Posterior cingulate gyrus (tissue), 11 donors: ENCODE measurements at regions of chr2 and their contacts with region 1.

Region 1: DNA sequence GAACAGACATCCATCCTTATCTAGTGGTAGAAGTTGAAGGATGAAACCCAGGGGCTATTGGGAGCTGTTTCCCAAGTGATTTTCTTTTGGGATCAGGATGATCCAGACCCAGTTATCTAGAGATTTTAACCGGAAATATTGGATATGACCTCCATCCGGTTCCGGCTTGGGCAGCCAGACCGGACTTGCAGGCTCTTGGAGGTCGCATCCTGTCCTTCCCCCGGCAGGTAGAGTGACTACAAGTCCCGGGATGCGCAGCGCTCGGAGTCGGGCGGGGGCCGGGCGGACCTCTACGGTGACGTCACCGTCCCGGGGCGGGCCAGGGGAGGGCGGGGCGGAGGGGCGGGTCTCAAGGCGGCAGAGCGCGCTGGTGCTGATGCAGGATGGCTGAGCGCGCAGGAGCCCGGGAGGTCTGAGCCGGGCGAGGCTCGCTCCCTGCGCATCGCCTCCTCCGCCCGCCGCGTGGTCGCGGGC is at the start of gene KIF5C:
- DNase-seq: peak; percentile 80 to 99 (median 95)

Region 2: DNA sequence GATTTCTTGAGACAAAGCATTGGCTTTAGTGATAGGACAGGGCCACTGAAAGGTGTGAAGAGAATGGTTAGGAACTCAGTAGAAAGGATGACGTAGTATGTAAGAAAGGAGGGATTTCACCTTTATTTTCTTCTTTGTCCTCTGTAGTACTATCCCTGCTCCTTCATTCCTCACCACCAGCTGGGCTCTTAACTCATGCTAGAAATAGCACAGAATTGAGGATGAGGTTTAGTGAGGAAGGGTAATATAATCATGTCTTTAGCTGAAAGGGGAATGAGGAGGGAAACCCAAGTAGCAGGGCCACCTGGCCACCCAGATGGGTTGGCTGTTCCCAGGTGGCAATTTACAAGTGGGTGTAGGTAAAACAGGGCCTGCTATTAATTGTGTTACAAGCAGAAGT is 1014.9 kb before region 1 on chr2:
- intact Hi-C with region 1: no loop called
- DNase-seq: peak in 1 of 10 donors; percentile 33

Region 3: DNA sequence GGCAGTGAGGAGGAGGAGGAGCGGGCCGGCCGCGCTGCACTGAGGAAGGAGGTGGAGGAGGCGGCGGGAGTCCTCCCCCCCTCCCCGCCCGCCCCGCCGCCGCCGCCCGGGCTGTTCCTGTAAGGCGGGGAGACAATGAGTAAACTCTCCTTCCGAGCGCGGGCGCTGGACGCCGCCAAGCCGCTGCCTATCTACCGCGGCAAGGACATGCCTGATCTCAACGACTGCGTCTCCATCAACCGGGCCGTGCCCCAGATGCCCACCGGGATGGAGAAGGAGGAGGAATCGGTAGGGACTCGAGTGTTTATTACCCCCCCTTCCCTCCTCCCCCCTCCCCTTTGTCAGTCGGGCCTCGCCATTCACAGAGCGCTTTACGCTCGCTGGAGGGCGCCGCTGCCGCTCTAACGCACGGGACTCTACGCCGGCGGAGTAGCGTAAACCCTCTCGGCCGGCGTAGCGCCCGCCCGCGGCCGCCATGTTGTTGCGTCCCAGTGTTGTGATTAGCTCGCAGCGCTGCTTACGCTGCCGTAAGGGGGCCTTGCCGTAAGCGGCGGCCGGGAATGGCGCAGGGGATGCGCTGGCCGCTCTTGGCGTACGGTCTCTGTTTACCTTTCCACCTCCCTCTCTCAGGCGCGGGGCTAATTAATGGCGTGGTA is 229.9 kb before region 1 on chr2:
- intact Hi-C with region 1: loop called (anchors 2 kb)
- DNase-seq: peak; percentile 87 to 99 (median 95)

Region 4: GRCh38 chr2:148917431-148917830 is 42.5 kb after region 1 on chr2:
- intact Hi-C with region 1: no loop called
- DNase-seq: no peak

Region 5: DNA sequence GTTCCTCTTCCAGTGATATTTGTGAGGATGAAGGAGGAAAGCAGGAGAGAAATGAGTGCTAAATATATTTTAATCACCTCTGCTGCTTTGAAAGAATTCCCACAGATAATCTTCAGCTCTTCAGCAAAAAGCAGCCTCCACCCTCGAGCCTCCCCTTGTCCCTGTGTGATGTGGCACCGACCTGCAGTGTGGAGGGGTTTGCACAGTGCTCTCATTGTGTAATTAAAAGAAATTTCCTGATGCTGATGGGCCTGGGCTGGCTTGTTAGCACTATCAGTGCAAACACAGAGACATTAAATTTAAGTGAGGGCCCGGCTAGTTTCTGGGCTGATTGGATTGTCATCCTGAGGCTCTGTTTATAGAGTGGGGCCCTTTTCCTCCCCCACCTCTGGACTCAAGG is 53.5 kb after region 1 on chr2:
- intact Hi-C with region 1: loop called (anchors 2 kb)
- DNase-seq: no peak

Region 6: DNA sequence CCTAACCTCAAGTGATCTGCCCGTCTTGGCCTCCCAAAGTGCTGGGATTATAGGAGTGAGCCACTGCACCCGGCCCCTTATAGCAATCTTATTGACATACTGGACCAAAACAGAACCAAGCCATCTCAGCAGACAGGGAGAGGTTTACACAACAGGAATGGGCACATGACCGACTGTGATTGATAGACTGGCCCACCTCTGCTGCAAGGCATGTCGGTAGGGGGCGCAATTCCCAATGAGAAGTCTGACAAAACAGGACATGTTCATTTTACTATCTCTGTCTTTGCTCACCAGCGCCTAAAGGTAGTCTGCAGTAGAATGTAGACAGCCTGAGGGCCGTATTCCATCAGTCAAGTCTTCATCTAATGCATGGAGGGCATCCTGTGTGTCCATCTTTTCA is 165.5 kb after region 1 on chr2:
- intact Hi-C with region 1: no loop called
- DNase-seq: peak in 1 of 10 donors; percentile 64